ENCODE measurements at regions of chr6 and their contacts with region 1.

Region 1: DNA sequence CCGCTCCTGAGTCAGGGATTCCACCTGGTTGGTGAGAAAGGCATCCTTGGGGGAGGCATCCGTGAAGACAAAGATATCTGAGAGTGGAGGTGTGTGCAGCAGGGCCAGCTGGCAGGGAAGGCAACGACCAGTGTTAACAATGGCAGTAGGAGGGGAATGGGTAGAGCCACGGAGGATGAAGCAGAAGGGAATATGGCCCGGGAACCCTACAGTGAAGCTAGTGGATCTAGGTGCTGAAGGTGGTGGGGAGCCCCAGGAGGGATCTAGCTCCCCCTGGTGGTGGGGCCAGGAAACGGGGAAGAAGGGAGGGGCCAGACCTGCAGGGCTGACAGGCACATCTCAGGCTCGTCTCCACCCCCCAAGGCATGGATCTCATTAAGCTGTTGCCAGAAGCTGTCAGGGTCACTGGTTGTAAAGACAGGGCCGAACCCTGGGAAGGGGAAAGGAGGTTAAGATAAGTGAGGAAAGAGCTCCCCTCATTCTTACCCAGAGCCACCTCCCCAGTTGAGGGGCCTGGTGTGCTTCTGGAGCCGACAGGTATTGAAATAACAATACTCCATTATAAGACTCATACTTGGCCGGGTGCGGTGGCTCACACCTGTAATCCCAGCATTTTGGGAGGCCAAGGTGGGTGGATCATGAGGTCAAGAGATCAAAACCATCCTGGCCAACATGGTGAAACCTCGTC is 7.3 kb downstream of the VWA7 start:
- DNase-seq: no peak
- H3K4me3 ChIP-seq: no peak overlapping the region
- H3K27ac ChIP-seq: no peak overlapping the region
- H3K27me3 ChIP-seq: no peaks in the 10 kb centered on the region
- CTCF ChIP-seq: peak; percentile 69

Region 2: DNA sequence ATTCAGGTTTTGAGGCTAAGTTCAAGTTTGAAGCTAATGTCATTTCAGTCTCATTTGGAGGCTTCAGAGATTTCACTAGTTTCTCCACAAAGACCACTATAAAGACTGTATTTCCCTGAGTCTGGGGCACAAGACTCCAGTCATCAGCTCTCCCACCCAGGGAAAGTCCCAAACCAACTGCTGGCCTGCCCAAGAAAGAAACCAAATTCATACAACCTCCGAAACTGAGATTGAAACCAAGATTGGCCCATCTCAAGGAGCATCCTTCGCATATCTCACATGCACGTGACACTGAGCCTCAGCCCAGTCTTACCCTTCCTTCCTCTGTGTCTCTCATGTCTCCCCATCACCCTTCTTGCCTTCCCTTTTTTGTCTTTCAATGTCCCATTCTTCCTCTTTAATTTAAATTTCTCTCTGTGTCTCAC is 201.3 kb before region 1 on chr6:
- CTCF ChIA-PET with region 1: no interaction called
- POLR2A ChIA-PET with region 1: no interaction called
- DNase-seq: no peak
- H3K4me3 ChIP-seq: no peak overlapping the region
- H3K27ac ChIP-seq: no peak overlapping the region
- H3K27me3 ChIP-seq: peaks cover 21% of the 10 kb centered on the region
- CTCF ChIP-seq: no peak

Region 3: GRCh38 chr6:31702819-31703522 is 66.9 kb before region 1 on chr6 and contains the start of gene ABHD16A:
- CTCF ChIA-PET with region 1: interaction called, 11 read pairs
- POLR2A ChIA-PET with region 1: no interaction called
- DNase-seq: peak; percentile 95
- H3K4me3 ChIP-seq: peak within 1 kb of the TSS; percentile 98
- H3K27ac ChIP-seq: peak within 1 kb of the TSS; percentile 94
- H3K27me3 ChIP-seq: no peaks in the 10 kb centered on the region
- CTCF ChIP-seq: no peak
- polyA plus RNA-seq, gene ABHD16A: 34.0 and 36.3 TPM in 2 replicates

Region 4: GRCh38 chr6:31752739-31753319 is 17.0 kb before region 1 on chr6:
- CTCF ChIA-PET with region 1: interaction called, 10 read pairs
- POLR2A ChIA-PET with region 1: no interaction called
- DNase-seq: no peak
- H3K4me3 ChIP-seq: no peak overlapping the region
- H3K27ac ChIP-seq: peak overlapping the region; percentile 21
- H3K27me3 ChIP-seq: no peaks in the 10 kb centered on the region
- CTCF ChIP-seq: no peak

Region 5: GRCh38 chr6:31806465-31807272 is 36.8 kb after region 1 on chr6 and contains the start of gene LSM2:
- CTCF ChIA-PET with region 1: interaction called, 10 read pairs
- POLR2A ChIA-PET with region 1: no interaction called
- DNase-seq: peak; percentile 93
- H3K4me3 ChIP-seq: peak within 1 kb of the TSS; percentile 78
- H3K27ac ChIP-seq: peak within 1 kb of the TSS; percentile 70
- H3K27me3 ChIP-seq: no peaks in the 10 kb centered on the region
- CTCF ChIP-seq: peak; percentile 18
- polyA plus RNA-seq, gene LSM2: 34.2 and 38.3 TPM in 2 replicates